ENCODE measurements at regions of chr4 and their contacts with region 1.

Region 1: DNA sequence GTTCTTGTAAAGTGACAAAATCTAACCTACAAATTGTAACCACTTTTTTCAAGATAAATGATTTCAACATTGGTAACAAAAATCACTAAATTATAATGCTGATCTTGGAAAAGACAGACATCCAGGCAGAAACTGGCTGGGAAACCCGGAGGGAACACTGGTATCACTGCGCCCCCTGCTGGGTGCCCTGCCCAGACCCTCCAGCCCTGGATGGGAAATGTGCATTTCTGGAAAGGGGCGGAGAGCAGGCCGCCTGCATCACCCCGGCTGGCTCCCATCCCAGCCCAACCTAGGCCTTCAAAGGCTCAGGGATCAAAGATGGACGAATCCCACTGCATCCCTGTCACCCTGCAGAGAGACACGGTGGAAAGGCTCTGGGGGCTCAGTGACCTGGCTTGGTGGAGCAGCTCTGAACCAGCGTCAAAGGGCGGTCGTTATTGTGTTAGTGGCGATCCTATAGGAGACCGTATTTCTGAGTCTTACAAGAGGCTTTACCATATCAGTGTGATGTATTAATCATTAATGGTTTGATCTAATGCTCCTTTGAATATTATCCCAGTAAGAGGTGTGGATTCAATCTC is 37.3 kb downstream of the ACOX3 start:
- DNase-seq: peak; percentile 33 to 93
- H3K4me3 ChIP-seq: no peak overlapping the region
- H3K27ac ChIP-seq: no peak overlapping the region
- H3K4me1 ChIP-seq: no peaks in the 10 kb centered on the region; a peak in 1 of 7 replicates
- H3K27me3 ChIP-seq: no peaks in the 10 kb centered on the region
- CTCF ChIP-seq: peak in 2 of 3 experiments; percentile 87 to 93; a peak in 3 of 4 replicates
- EP300 ChIP-seq: no peak
- POLR2A ChIP-seq: no peak
- RAD21 ChIP-seq: peak; percentile 94 to 97

Region 2: GRCh38 chr4:8241895-8242696 is 161.2 kb before region 1 on chr4:
- CTCF ChIA-PET with region 1: interaction called, 33 read pairs
- POLR2A ChIA-PET with region 1: no interaction called
- DNase-seq: peak; percentile 76 to 100
- H3K4me3 ChIP-seq: no peak overlapping the region
- H3K27ac ChIP-seq: no peak overlapping the region
- H3K4me1 ChIP-seq: peaks cover 0 to 8% (median 3%) of the 10 kb centered on the region in 4 experiments; a peak in 6 of 7 replicates
- H3K27me3 ChIP-seq: no peaks in the 10 kb centered on the region
- CTCF ChIP-seq: peak in 2 of 3 experiments; percentile 87 to 97; a peak in 3 of 4 replicates
- EP300 ChIP-seq: no peak
- POLR2A ChIP-seq: no peak
- RAD21 ChIP-seq: peak; percentile 94 to 96

Region 3: GRCh38 chr4:8315435-8316250 is 87.6 kb before region 1 on chr4:
- CTCF ChIA-PET with region 1: interaction called, 94 read pairs
- POLR2A ChIA-PET with region 1: interaction called, 3 read pairs
- DNase-seq: peak in 1 of 2 experiments; percentile 58
- H3K4me3 ChIP-seq: no peak overlapping the region
- H3K27ac ChIP-seq: no peak overlapping the region
- H3K4me1 ChIP-seq: peaks cover 0 to 17% (median 12%) of the 10 kb centered on the region in 4 experiments; a peak in 6 of 7 replicates
- H3K27me3 ChIP-seq: no peaks in the 10 kb centered on the region; a peak in 2 of 7 replicates
- CTCF ChIP-seq: no peak
- EP300 ChIP-seq: no peak
- POLR2A ChIP-seq: no peak
- RAD21 ChIP-seq: no peak

Region 4: GRCh38 chr4:8322794-8323704 is 80.2 kb before region 1 on chr4:
- CTCF ChIA-PET with region 1: interaction called, 94 read pairs
- POLR2A ChIA-PET with region 1: interaction called, 3 read pairs
- DNase-seq: peak in 1 of 2 experiments; percentile 11
- H3K4me3 ChIP-seq: no peak overlapping the region
- H3K27ac ChIP-seq: no peak overlapping the region
- H3K4me1 ChIP-seq: no peaks in the 10 kb centered on the region
- H3K27me3 ChIP-seq: no peaks in the 10 kb centered on the region
- CTCF ChIP-seq: no peak
- EP300 ChIP-seq: no peak
- POLR2A ChIP-seq: no peak
- RAD21 ChIP-seq: no peak

Region 5: GRCh38 chr4:8330821-8331574 is 72.3 kb before region 1 on chr4:
- CTCF ChIA-PET with region 1: interaction called, 13 read pairs
- POLR2A ChIA-PET with region 1: no interaction called
- DNase-seq: no peak
- H3K4me3 ChIP-seq: no peak overlapping the region
- H3K27ac ChIP-seq: no peak overlapping the region
- H3K4me1 ChIP-seq: no peaks in the 10 kb centered on the region
- H3K27me3 ChIP-seq: no peaks in the 10 kb centered on the region
- CTCF ChIP-seq: no peak
- EP300 ChIP-seq: no peak
- POLR2A ChIP-seq: no peak
- RAD21 ChIP-seq: no peak

Region 6: DNA sequence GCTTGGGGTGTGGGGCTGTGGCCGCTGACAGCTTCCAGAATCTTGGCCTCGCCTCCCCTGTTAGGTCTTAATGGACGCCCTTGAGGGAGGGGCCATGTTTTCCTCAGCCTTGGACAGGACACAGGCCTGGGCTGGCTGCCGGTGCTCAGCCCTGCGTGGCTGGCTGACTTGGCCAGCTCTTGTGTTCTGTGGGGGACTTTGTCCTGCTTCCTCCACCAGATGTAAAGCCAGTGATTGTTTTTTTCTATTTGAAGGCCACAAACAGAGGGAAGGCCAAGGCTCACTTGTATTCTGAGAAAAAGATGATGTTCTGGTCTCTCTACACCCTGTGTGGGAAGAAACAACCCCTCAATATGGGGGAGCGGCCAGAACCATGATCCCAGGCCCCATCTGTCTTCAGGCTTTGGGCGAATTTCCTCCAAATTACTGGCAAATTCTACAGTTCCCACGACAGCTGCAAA is 62.5 kb before region 1 on chr4:
- CTCF ChIA-PET with region 1: interaction called, 23 read pairs
- POLR2A ChIA-PET with region 1: no interaction called
- DNase-seq: no peak
- H3K4me3 ChIP-seq: no peak overlapping the region
- H3K27ac ChIP-seq: no peak overlapping the region
- H3K4me1 ChIP-seq: peaks cover 0 to 4% (median 2%) of the 10 kb centered on the region in 4 experiments; a peak in 3 of 7 replicates
- H3K27me3 ChIP-seq: no peaks in the 10 kb centered on the region
- CTCF ChIP-seq: no peak
- EP300 ChIP-seq: no peak
- POLR2A ChIP-seq: no peak
- RAD21 ChIP-seq: no peak

Region 7: GRCh38 chr4:8391972-8392371 is 11.3 kb before region 1 on chr4:
- CTCF ChIA-PET with region 1: interaction called, 37 read pairs
- POLR2A ChIA-PET with region 1: interaction called, 3 read pairs
- DNase-seq: no peak
- H3K4me3 ChIP-seq: no peak overlapping the region
- H3K27ac ChIP-seq: no peak overlapping the region
- H3K4me1 ChIP-seq: peaks cover 0 to 2% (median 1%) of the 10 kb centered on the region in 4 experiments; a peak in 6 of 7 replicates
- H3K27me3 ChIP-seq: no peaks in the 10 kb centered on the region
- CTCF ChIP-seq: no peak
- EP300 ChIP-seq: no peak
- POLR2A ChIP-seq: no peak
- RAD21 ChIP-seq: no peak

Measured in H1 (cell line).